ENCODE measurements at regions of chr13 and their contacts with region 1.

Region 1: GRCh38 chr13:66887088-66887487 is 343.0 kb downstream of the PCDH9 start:
- DNase-seq: peak; percentile 66
- ATAC-seq: peak; percentile 88
- H3K4me3 ChIP-seq: peak overlapping the region in 3 of 5 experiments; percentile 11 to 16 (median 15)
- H3K4me3 Mint-ChIP-seq: peak overlapping the region; percentile 63
- H3K27ac ChIP-seq: no peak overlapping the region
- H3K27ac Mint-ChIP-seq: peak overlapping the region; percentile 27
- H3K4me1 ChIP-seq: peaks cover 26 to 32% of the 10 kb centered on the region in 2 donors
- H3K4me1 Mint-ChIP-seq: peaks cover 41% of the 10 kb centered on the region
- H3K27me3 ChIP-seq: no peaks in the 10 kb centered on the region
- H3K27me3 Mint-ChIP-seq: no peaks in the 10 kb centered on the region
- CTCF ChIP-seq: no peak

Region 2: DNA sequence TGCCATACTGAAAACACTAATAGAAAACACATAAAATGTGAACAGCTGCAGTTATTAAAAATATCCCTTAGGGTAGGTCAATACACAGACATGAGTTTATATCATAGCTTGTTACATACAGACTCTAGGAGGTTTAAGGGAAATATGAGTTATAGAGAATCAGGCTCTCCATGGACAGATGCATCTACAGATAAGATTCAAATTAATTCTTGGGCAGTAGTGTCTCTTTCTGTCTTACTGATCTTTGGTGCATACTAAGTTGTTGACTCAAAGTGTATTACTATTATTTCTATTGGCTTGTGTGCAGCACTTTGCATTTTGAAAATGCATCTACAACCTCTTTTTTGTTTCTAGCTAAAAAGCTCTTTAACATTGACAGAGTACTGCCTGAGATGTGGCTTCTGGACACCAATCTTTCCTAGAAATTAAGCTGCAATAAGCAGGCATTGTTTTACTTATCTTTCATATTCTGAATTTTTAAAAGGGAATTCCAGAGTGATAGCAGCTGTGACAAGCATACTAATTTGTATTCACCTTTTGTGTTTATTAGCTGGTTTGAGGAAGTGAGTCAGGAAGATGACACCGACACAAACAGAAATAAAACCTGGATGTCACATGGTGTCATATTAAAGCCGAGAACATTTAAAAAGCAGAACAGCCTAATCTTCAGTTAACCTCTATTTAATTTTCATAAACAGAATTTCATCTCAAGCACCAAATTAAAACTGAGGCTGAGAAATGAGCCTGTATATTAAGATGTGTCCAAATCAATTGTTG is 56.0 kb before region 1 on chr13:
- CTCF ChIA-PET with region 1: no interaction called
- POLR2A ChIA-PET with region 1: no interaction called
- intact Hi-C with region 1: loop called (anchors 2 kb)
- DNase-seq: peak; percentile 60
- ATAC-seq: peak; percentile 47
- H3K4me3 ChIP-seq: peak overlapping the region in 1 of 5 experiments; percentile 22
- H3K4me3 Mint-ChIP-seq: peak overlapping the region; percentile 68
- H3K27ac ChIP-seq: peak overlapping the region; percentile 49 to 74
- H3K27ac Mint-ChIP-seq: peak overlapping the region; percentile 79
- H3K4me1 ChIP-seq: peaks cover 10 to 14% of the 10 kb centered on the region in 2 donors
- H3K4me1 Mint-ChIP-seq: peaks cover 21% of the 10 kb centered on the region
- H3K27me3 ChIP-seq: no peaks in the 10 kb centered on the region
- H3K27me3 Mint-ChIP-seq: no peaks in the 10 kb centered on the region
- CTCF ChIP-seq: no peak

Region 3: GRCh38 chr13:66933994-66934393 is 46.9 kb after region 1 on chr13:
- CTCF ChIA-PET with region 1: no interaction called
- POLR2A ChIA-PET with region 1: no interaction called
- intact Hi-C with region 1: no loop called
- DNase-seq: no peak
- ATAC-seq: no peak
- H3K4me3 ChIP-seq: no peak overlapping the region
- H3K4me3 Mint-ChIP-seq: no peak overlapping the region
- H3K27ac ChIP-seq: no peak overlapping the region
- H3K27ac Mint-ChIP-seq: no peak overlapping the region
- H3K4me1 ChIP-seq: peaks cover 0 to 12% of the 10 kb centered on the region in 2 donors
- H3K4me1 Mint-ChIP-seq: peaks cover 4% of the 10 kb centered on the region
- H3K27me3 ChIP-seq: no peaks in the 10 kb centered on the region
- H3K27me3 Mint-ChIP-seq: no peaks in the 10 kb centered on the region
- CTCF ChIP-seq: no peak

Region 4: GRCh38 chr13:67119481-67119883 is 232.4 kb after region 1 on chr13:
- CTCF ChIA-PET with region 1: no interaction called
- POLR2A ChIA-PET with region 1: no interaction called
- intact Hi-C with region 1: no loop called
- DNase-seq: no peak
- ATAC-seq: no peak
- H3K4me3 ChIP-seq: no peak overlapping the region
- H3K4me3 Mint-ChIP-seq: no peak overlapping the region
- H3K27ac ChIP-seq: no peak overlapping the region
- H3K27ac Mint-ChIP-seq: no peak overlapping the region
- H3K4me1 ChIP-seq: peaks cover 0 to 4% of the 10 kb centered on the region in 2 donors
- H3K4me1 Mint-ChIP-seq: no peaks in the 10 kb centered on the region
- H3K27me3 ChIP-seq: no peaks in the 10 kb centered on the region
- H3K27me3 Mint-ChIP-seq: no peaks in the 10 kb centered on the region
- CTCF ChIP-seq: no peak

Measured in B cell (primary cell).